ENCODE measurements at regions of chr14 and their contacts with region 1.

Region 1: DNA sequence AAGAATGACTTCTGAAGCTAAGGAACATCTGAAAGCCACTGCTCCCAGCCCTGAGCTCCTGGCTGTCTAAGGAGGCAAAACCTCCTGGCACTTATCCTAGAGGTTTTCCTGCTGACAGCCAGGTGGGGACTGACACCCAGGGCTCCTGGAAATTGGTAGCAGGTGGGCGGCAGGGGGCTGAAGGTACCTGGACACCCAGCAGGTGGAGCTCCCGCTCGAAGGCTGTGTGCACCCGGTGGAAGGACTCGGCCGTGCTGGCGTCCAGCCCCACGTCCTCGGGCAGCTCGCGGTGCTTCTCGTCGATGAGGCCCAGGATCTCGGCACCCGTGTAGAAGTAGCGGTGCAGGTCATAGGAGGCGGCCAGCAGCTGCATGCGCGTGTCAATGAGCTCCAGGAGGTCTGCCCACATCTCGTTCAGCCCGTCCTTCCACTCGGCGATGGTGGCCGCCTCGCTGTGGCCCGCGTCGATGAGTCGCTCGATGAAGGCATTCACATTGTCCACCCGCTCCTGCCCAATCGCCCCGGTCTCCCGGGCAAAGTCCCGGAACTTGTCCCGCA is 68.2 kb downstream of the PLEKHG3 start:
- DNase-seq: no peak
- H3K4me3 ChIP-seq: no peak overlapping the region
- H3K27ac ChIP-seq: no peak overlapping the region
- H3K4me1 ChIP-seq: no peaks in the 10 kb centered on the region; a peak in 1 of 7 replicates
- H3K27me3 ChIP-seq: no peaks in the 10 kb centered on the region
- CTCF ChIP-seq: peak in 2 of 3 experiments; percentile 45 to 66; a peak in 3 of 4 replicates
- EP300 ChIP-seq: no peak
- POLR2A ChIP-seq: no peak
- RAD21 ChIP-seq: peak; percentile 26 to 54; a peak in 3 of 4 replicates

Region 2: GRCh38 chr14:64758691-64759584 is 13.5 kb before region 1 on chr14:
- CTCF ChIA-PET with region 1: interaction called, 34 read pairs
- POLR2A ChIA-PET with region 1: no interaction called
- DNase-seq: no peak
- H3K4me3 ChIP-seq: no peak overlapping the region
- H3K27ac ChIP-seq: no peak overlapping the region
- H3K4me1 ChIP-seq: peaks cover 0 to 23% (median 13%) of the 10 kb centered on the region in 4 experiments; a peak in 6 of 7 replicates
- H3K27me3 ChIP-seq: no peaks in the 10 kb centered on the region; a peak in 2 of 7 replicates
- CTCF ChIP-seq: no peak
- EP300 ChIP-seq: no peak
- POLR2A ChIP-seq: no peak
- RAD21 ChIP-seq: no peak

Region 3: DNA sequence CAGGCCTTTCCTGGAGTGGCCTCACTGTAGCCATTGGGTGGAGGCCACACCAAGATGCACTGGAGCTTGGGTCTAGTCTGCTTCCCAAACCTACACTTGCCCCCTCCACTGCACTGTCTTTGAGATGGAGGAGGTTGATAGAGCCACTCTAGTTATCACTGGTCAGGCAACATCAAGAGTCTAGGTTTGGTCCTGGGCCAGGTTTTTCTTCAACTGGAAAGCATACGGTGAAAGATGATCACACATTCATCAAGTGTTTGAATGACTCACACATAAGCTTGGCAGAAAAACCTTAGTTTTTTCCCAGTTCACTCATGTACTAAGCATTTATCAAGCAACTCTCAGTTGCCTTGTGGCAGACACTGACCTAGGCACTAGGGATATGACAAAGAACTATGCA is 16.2 kb after region 1 on chr14:
- CTCF ChIA-PET with region 1: interaction called, 29 read pairs
- POLR2A ChIA-PET with region 1: no interaction called
- DNase-seq: no peak
- H3K4me3 ChIP-seq: no peak overlapping the region
- H3K27ac ChIP-seq: no peak overlapping the region
- H3K4me1 ChIP-seq: peaks cover 0 to 10% (median 1%) of the 10 kb centered on the region in 4 experiments; a peak in 1 of 7 replicates
- H3K27me3 ChIP-seq: no peaks in the 10 kb centered on the region
- CTCF ChIP-seq: no peak
- EP300 ChIP-seq: no peak
- POLR2A ChIP-seq: no peak
- RAD21 ChIP-seq: no peak

Region 4: GRCh38 chr14:64815257-64815656 is 42.8 kb after region 1 on chr14:
- CTCF ChIA-PET with region 1: no interaction called
- POLR2A ChIA-PET with region 1: no interaction called
- DNase-seq: no peak
- H3K4me3 ChIP-seq: no peak overlapping the region
- H3K27ac ChIP-seq: no peak overlapping the region
- H3K4me1 ChIP-seq: peaks cover 0 to 2% (median under 1%) of the 10 kb centered on the region in 4 experiments; a peak in 1 of 7 replicates
- H3K27me3 ChIP-seq: no peaks in the 10 kb centered on the region; a peak in 1 of 7 replicates
- CTCF ChIP-seq: no peak
- EP300 ChIP-seq: no peak
- POLR2A ChIP-seq: no peak
- RAD21 ChIP-seq: no peak

Region 5: GRCh38 chr14:64919622-64920021 is 147.2 kb after region 1 on chr14:
- CTCF ChIA-PET with region 1: no interaction called
- POLR2A ChIA-PET with region 1: no interaction called
- DNase-seq: no peak
- H3K4me3 ChIP-seq: no peak overlapping the region
- H3K27ac ChIP-seq: no peak overlapping the region
- H3K4me1 ChIP-seq: peaks cover 0 to 4% (median 0%) of the 10 kb centered on the region in 4 experiments; a peak in 3 of 7 replicates
- H3K27me3 ChIP-seq: no peaks in the 10 kb centered on the region
- CTCF ChIP-seq: no peak
- EP300 ChIP-seq: no peak
- POLR2A ChIP-seq: no peak
- RAD21 ChIP-seq: no peak